Posterior vena cava (tissue), 2 donors: ENCODE measurements at regions of chr16 and their contacts with region 1.

Region 1: GRCh38 chr16:370979-371505 is 704 bp upstream of the MRPL28 start:
- DNase-seq: no peak

Region 2: DNA sequence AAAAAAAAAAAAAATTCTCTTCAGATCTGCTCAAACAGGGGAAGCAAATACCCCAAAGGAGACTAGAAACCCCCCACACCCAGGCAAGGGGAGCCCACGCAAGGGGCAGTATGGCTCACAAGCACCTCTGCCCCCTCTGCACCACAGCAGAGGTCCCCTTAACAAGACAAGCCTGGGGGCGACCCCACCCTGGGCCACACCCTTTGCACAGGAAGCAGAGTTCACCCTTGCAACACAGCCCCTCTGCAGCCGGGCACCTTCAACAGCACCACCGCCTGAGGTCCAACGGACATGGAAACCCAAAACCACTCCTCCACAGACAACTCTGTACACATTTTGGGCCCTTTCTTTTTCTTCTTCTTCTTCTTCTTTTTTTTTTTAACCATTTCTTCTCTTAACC is 31.4 kb before region 1 on chr16:
- intact Hi-C with region 1: loop called in 1 of 2 experiments (anchors 1 kb)
- DNase-seq: no peak

Region 3: DNA sequence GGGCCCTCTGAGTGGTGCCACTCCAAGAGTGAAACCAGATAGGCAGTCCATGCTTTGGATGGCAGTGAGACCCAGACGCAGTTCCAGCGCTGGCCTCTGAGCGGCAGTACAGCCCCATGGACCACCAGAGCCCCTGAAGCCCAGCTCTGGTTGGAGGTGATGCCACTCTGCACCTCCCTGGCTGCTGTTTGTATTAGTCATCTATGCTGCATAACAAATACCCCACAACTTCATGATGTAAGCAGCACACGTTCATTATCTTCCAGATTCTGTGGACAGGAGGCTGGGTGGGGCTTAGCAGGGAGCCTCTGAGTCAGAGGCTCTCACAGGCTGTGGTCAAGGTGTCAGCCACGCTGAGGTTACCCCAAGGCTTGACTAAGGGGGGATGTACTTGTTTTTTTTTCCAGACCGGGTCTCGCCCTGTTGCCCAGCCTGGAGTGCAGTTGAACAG is 20.9 kb after region 1 on chr16:
- intact Hi-C with region 1: no loop called
- DNase-seq: peak; percentile 85